ENCODE measurements at regions of chr5 and their contacts with region 1.

Region 1: DNA sequence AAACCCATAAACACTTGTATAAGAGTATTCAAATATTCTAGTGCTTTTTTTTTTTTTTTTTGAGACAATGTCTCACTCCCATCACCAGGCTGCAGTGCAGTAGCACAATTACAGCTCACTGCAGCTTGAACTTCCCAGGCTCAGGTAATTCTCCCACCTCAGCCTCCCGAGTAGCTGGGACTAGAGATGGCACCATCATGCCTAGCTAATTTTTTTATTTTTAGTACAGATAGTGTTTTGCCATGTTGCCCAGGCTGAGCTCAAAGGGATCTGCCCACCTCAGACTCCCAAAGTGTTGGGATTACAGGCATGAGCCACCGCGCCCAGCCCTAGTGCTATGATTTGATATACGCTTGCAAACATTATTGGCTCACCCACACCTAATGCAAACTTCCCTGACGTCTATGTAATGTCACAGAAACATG is 11.8 kb downstream of the IL6ST start:
- DNase-seq: peak in 4 of 9 experiments; percentile 18 to 62 (median 42)
- ATAC-seq: peak; percentile 35
- H3K4me3 ChIP-seq: no peak overlapping the region
- H3K4me3 Mint-ChIP-seq: peak overlapping the region; percentile 59
- H3K27ac ChIP-seq: no peak overlapping the region
- H3K27ac Mint-ChIP-seq: peak overlapping the region; percentile 64
- H3K4me1 ChIP-seq: peaks cover 56% of the 10 kb centered on the region
- H3K4me1 Mint-ChIP-seq: peaks cover 69% of the 10 kb centered on the region
- H3K27me3 ChIP-seq: no peaks in the 10 kb centered on the region
- H3K27me3 Mint-ChIP-seq: no peaks in the 10 kb centered on the region
- CTCF ChIP-seq: peak; percentile 50

Region 2: GRCh38 chr5:55936100-55936693 is 46.8 kb before region 1 on chr5:
- CTCF ChIA-PET with region 1: interaction called, 17 read pairs
- POLR2A ChIA-PET with region 1: no interaction called
- intact Hi-C with region 1: loop called in 1 of 2 experiments (anchors 2 kb)
- DNase-seq: peak; percentile 53 to 87 (median 80)
- ATAC-seq: peak; percentile 92
- H3K4me3 ChIP-seq: no peak overlapping the region
- H3K4me3 Mint-ChIP-seq: no peak overlapping the region
- H3K27ac ChIP-seq: no peak overlapping the region
- H3K27ac Mint-ChIP-seq: peak overlapping the region; percentile 55
- H3K4me1 ChIP-seq: no peaks in the 10 kb centered on the region
- H3K4me1 Mint-ChIP-seq: peaks cover 10% of the 10 kb centered on the region
- H3K27me3 ChIP-seq: no peaks in the 10 kb centered on the region
- H3K27me3 Mint-ChIP-seq: no peaks in the 10 kb centered on the region
- CTCF ChIP-seq: peak; percentile 86